ENCODE measurements at regions of chr11 and their contacts with region 1.

Region 1: GRCh38 chr11:73177778-73178577 is 35.9 kb upstream of the FCHSD2 start:
- DNase-seq: peak; percentile 60 to 81
- H3K4me3 ChIP-seq: no peak overlapping the region
- H3K27ac ChIP-seq: no peak overlapping the region
- H3K4me1 ChIP-seq: no peaks in the 10 kb centered on the region
- H3K27me3 ChIP-seq: no peaks in the 10 kb centered on the region
- CTCF ChIP-seq: peak; percentile 90 to 93 (median 91)
- EP300 ChIP-seq: no peak
- POLR2A ChIP-seq: no peak
- RAD21 ChIP-seq: peak; percentile 99 to 100

Region 2: GRCh38 chr11:72840780-72841179 is 337.2 kb before region 1 on chr11:
- CTCF ChIA-PET with region 1: interaction called, 258 read pairs
- POLR2A ChIA-PET with region 1: no interaction called
- DNase-seq: no peak
- H3K4me3 ChIP-seq: no peak overlapping the region
- H3K27ac ChIP-seq: no peak overlapping the region
- H3K4me1 ChIP-seq: no peaks in the 10 kb centered on the region
- H3K27me3 ChIP-seq: no peaks in the 10 kb centered on the region
- CTCF ChIP-seq: no peak
- EP300 ChIP-seq: no peak
- POLR2A ChIP-seq: no peak
- RAD21 ChIP-seq: no peak

Region 3: GRCh38 chr11:72924568-72925190 is 253.3 kb before region 1 on chr11:
- CTCF ChIA-PET with region 1: interaction called, 22 read pairs
- POLR2A ChIA-PET with region 1: interaction called, 3 read pairs
- DNase-seq: no peak
- H3K4me3 ChIP-seq: no peak overlapping the region
- H3K27ac ChIP-seq: no peak overlapping the region
- H3K4me1 ChIP-seq: no peaks in the 10 kb centered on the region
- H3K27me3 ChIP-seq: no peaks in the 10 kb centered on the region
- CTCF ChIP-seq: peak in 1 of 3 experiments; percentile 29; a peak in 1 of 4 replicates
- EP300 ChIP-seq: no peak
- POLR2A ChIP-seq: no peak
- RAD21 ChIP-seq: peak; percentile 29 to 37; a peak in 3 of 4 replicates

Region 4: GRCh38 chr11:73147771-73148681 is 30.0 kb before region 1 on chr11:
- CTCF ChIA-PET with region 1: interaction called, 27 read pairs
- POLR2A ChIA-PET with region 1: no interaction called
- DNase-seq: no peak
- H3K4me3 ChIP-seq: no peak overlapping the region
- H3K27ac ChIP-seq: no peak overlapping the region
- H3K4me1 ChIP-seq: peaks cover 7 to 15% (median 9%) of the 10 kb centered on the region in 4 experiments
- H3K27me3 ChIP-seq: no peaks in the 10 kb centered on the region; a peak in 1 of 7 replicates
- CTCF ChIP-seq: no peak
- EP300 ChIP-seq: no peak
- POLR2A ChIP-seq: no peak
- RAD21 ChIP-seq: no peak

Region 5: GRCh38 chr11:73164803-73165540 is 13.0 kb before region 1 on chr11:
- CTCF ChIA-PET with region 1: interaction called, 112 read pairs
- POLR2A ChIA-PET with region 1: interaction called, 3 read pairs
- DNase-seq: no peak
- H3K4me3 ChIP-seq: no peak overlapping the region
- H3K27ac ChIP-seq: no peak overlapping the region
- H3K4me1 ChIP-seq: peaks cover 0 to 5% (median 3%) of the 10 kb centered on the region in 4 experiments; a peak in 2 of 7 replicates
- H3K27me3 ChIP-seq: no peaks in the 10 kb centered on the region; a peak in 1 of 7 replicates
- CTCF ChIP-seq: no peak
- EP300 ChIP-seq: no peak
- POLR2A ChIP-seq: no peak
- RAD21 ChIP-seq: no peak

Region 6: GRCh38 chr11:73236854-73237253 is 58.9 kb after region 1 on chr11:
- CTCF ChIA-PET with region 1: interaction called, 451 read pairs
- POLR2A ChIA-PET with region 1: no interaction called
- DNase-seq: peak in 1 of 2 experiments; percentile 87
- H3K4me3 ChIP-seq: no peak overlapping the region
- H3K27ac ChIP-seq: no peak overlapping the region
- H3K4me1 ChIP-seq: peaks cover 0 to 4% (median 3%) of the 10 kb centered on the region in 4 experiments; a peak in 3 of 7 replicates
- H3K27me3 ChIP-seq: no peaks in the 10 kb centered on the region
- CTCF ChIP-seq: peak; percentile 90 to 93 (median 91)
- EP300 ChIP-seq: no peak
- POLR2A ChIP-seq: no peak
- RAD21 ChIP-seq: peak; percentile 89 to 91

Measured in H1 (cell line).